Endothelial cell of umbilical vein (primary cell): ENCODE measurements at regions of chr4 and their contacts with region 1.

Region 1: GRCh38 chr4:90357117-90357710 is 230.0 kb downstream of the CCSER1 start:
- DNase-seq: peak; percentile 71
- H3K4me3 ChIP-seq: no peak overlapping the region
- H3K27ac ChIP-seq: no peak overlapping the region
- H3K4me1 ChIP-seq: no peaks in the 10 kb centered on the region
- H3K27me3 ChIP-seq: no peaks in the 10 kb centered on the region
- CTCF ChIP-seq: peak; percentile 44 to 52
- POLR2A ChIP-seq: no peak

Region 2: GRCh38 chr4:90078440-90078839 is 278.8 kb before region 1 on chr4:
- CTCF ChIA-PET with region 1: no interaction called
- POLR2A ChIA-PET with region 1: no interaction called
- dilution Hi-C with region 1: no loop called
- intact Hi-C with region 1: no loop called
- DNase-seq: no peak
- H3K4me3 ChIP-seq: no peak overlapping the region
- H3K27ac ChIP-seq: no peak overlapping the region
- H3K4me1 ChIP-seq: no peaks in the 10 kb centered on the region
- H3K27me3 ChIP-seq: peaks cover 7 to 10% of the 10 kb centered on the region in 2 experiments
- CTCF ChIP-seq: no peak
- POLR2A ChIP-seq: no peak

Region 3: GRCh38 chr4:92163348-92163747 is 1806.1 kb after region 1 on chr4:
- CTCF ChIA-PET with region 1: no interaction called
- POLR2A ChIA-PET with region 1: no interaction called
- dilution Hi-C with region 1: no loop called
- intact Hi-C with region 1: loop called (anchors 5 kb)
- DNase-seq: peak; percentile 27
- H3K4me3 ChIP-seq: no peak overlapping the region
- H3K27ac ChIP-seq: no peak overlapping the region
- H3K4me1 ChIP-seq: no peaks in the 10 kb centered on the region
- H3K27me3 ChIP-seq: no peaks in the 10 kb centered on the region
- CTCF ChIP-seq: peak; percentile 31 to 41
- POLR2A ChIP-seq: no peak